ENCODE measurements at regions of chr17 and their contacts with region 1.

Region 1: DNA sequence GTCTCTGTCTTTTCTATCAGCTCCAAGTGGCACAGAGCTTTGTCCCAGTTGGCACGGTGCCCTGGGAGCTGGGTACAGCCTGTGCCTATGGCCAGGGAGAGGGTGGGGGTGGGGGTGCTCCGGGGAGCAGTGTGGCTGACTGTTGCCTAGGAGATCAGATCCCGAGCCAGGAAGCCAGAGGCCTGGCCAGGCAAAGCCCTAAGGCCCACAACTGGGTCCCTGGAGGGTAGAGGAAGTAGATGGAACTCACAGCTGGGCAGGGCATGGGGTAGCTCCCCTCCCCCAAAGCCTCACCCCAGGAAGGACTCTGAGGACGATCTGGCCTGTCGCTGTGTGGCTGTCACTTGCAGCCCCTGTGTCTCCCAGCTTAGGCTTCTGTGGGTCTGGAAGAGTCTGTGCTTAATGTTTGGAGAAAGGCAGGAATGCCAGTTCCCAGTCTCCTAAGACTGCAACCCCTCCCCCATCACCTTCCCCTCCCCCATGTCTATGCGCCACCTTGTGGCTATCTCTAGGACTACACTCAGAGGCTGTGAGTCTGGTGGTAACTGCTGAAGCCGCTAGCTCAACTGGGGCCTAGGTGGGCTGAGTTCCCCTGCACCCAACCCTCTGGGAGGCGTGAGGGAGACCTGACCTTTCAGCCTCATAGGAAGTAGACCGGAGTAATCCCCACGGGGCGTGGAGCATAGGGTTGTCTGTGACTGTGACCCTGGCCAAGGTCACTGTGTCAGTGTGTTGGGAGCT is 12.6 kb downstream of the THRA start:
- DNase-seq: peak; percentile 78 to 81
- H3K4me3 ChIP-seq: no peak overlapping the region
- H3K4me3 Mint-ChIP-seq: no peak overlapping the region
- H3K27ac Mint-ChIP-seq: peak overlapping the region; percentile 47
- H3K4me1 ChIP-seq: peaks cover 49% of the 10 kb centered on the region
- H3K4me1 Mint-ChIP-seq: peaks cover 27% of the 10 kb centered on the region
- H3K27me3 ChIP-seq: no peaks in the 10 kb centered on the region
- H3K27me3 Mint-ChIP-seq: no peaks in the 10 kb centered on the region
- CTCF ChIP-seq: peak; percentile 92 to 94

Region 2: DNA sequence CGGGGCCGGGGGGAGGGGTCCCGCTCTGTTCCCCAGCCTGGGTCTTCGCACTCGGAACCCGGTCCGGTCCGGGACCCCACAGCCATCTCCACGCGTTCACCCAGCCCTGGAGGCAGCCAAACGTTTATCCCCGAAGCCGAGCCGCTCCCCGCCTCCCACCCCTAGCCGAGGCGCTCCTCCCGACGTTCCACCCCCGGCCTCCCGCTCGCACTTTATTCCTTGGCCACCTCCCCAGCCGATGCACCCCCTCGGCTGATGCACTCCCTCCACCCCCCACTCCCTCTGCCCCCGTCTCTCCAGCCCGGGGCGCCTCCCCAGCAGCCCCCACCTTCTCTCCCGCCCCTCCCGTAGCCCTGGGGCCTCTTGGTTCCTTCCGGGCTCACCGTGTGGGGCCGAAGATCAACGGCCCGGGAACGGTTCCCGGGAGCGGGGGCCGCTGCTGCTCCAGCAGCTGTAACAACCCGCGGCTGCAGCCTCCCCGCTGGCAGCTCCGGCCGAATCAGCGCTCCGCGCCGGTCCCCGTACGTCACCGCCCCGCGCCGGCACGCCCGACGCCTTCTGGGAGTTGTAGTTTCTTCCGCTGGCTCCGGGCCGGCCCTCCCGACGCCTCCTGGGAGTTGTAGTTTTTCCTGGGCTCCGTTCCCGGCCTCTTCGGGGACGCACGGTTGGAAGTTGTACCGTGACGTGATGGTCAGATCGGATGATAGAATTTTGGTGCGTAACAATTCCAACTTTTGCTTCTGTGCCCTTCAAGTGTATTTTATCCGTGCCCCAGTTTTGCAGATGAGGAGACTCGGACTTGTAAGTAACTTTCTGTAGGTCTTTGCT is 148.1 kb before region 1 on chr17 and contains the starts of genes LRRC3C and ORMDL3:
- CTCF ChIA-PET with region 1: no interaction called
- POLR2A ChIA-PET with region 1: no interaction called
- intact Hi-C with region 1: no loop called
- DNase-seq: peak; percentile 95 to 97
- H3K4me3 ChIP-seq: peak within 1 kb of the TSS; percentile 89
- H3K4me3 Mint-ChIP-seq: peak within 1 kb of the TSS; percentile 87
- H3K27ac Mint-ChIP-seq: peak within 1 kb of the TSS; percentile 97
- H3K4me1 ChIP-seq: peaks cover 29% of the 10 kb centered on the region
- H3K4me1 Mint-ChIP-seq: peaks cover 7% of the 10 kb centered on the region
- H3K27me3 ChIP-seq: no peaks in the 10 kb centered on the region
- H3K27me3 Mint-ChIP-seq: no peaks in the 10 kb centered on the region
- CTCF ChIP-seq: no peak
- total RNA-seq, gene LRRC3C: not detected in 2 replicates
- total RNA-seq, gene ORMDL3: 70.6 and 75.2 TPM in 2 replicates

Region 3: GRCh38 chr17:39988206-39988810 is 87.1 kb before region 1 on chr17:
- CTCF ChIA-PET with region 1: no interaction called
- POLR2A ChIA-PET with region 1: no interaction called
- intact Hi-C with region 1: no loop called
- DNase-seq: no peak
- H3K4me3 ChIP-seq: no peak overlapping the region
- H3K4me3 Mint-ChIP-seq: no peak overlapping the region
- H3K27ac Mint-ChIP-seq: no peak overlapping the region
- H3K4me1 ChIP-seq: no peaks in the 10 kb centered on the region
- H3K4me1 Mint-ChIP-seq: no peaks in the 10 kb centered on the region
- H3K27me3 ChIP-seq: no peaks in the 10 kb centered on the region
- H3K27me3 Mint-ChIP-seq: no peaks in the 10 kb centered on the region
- CTCF ChIP-seq: no peak

Region 4: DNA sequence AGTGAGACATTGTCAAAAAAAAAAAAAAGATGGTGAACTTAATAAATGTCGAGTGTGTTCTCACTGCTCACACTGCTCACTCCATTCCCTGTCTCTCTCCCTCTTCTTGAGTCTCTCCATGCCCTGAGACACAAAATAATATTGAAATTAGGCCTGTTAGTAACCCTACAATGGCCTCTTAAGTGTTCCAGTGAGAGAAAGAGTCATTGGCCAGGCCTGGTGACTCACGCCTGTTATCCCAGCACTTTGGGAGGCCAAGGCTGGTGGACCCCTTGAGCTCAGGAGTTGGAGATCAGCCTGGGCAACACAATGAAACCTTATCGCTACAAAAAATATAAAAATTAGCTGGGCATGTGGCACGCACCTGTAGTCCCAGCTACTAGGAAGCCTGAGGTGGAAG is 76.3 kb before region 1 on chr17:
- CTCF ChIA-PET with region 1: no interaction called
- POLR2A ChIA-PET with region 1: no interaction called
- intact Hi-C with region 1: no loop called
- DNase-seq: no peak
- H3K4me3 ChIP-seq: no peak overlapping the region
- H3K4me3 Mint-ChIP-seq: no peak overlapping the region
- H3K27ac Mint-ChIP-seq: no peak overlapping the region
- H3K4me1 ChIP-seq: no peaks in the 10 kb centered on the region
- H3K4me1 Mint-ChIP-seq: no peaks in the 10 kb centered on the region
- H3K27me3 ChIP-seq: no peaks in the 10 kb centered on the region
- H3K27me3 Mint-ChIP-seq: no peaks in the 10 kb centered on the region
- CTCF ChIP-seq: no peak

Region 5: DNA sequence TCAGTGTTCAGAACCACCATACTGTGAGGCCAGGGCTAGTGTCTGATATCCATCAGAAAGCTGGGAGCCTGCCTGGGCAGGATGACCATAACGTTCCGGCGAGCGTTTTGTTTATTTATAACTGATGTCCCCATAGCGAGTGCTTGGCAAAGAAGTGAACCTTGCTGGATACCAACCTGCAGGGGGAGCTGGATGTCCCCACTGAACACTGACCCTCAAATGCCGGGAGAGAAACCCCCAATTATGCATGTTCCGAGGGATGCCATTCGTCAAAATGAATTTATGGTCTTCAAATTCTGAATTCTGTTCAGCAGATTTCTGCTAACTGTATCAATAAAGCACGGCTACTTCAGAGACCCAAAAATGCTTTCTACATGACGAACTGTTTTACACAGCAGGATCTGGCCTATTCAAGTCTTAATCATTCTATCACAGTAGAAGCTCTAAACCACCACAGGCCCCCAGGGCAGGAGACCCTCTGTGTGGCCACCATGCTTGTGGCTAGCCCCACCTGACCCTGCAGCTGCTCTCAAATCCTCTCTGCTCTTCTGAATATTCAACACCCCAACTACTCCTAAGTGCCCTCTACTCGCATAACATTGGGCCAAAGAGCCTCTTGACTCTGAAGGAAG is 36.4 kb before region 1 on chr17:
- CTCF ChIA-PET with region 1: interaction called, 10 read pairs
- POLR2A ChIA-PET with region 1: no interaction called
- intact Hi-C with region 1: loop called (anchors 2 kb)
- DNase-seq: peak in 1 of 2 experiments; percentile 53
- H3K4me3 ChIP-seq: no peak overlapping the region
- H3K4me3 Mint-ChIP-seq: no peak overlapping the region
- H3K27ac Mint-ChIP-seq: no peak overlapping the region
- H3K4me1 ChIP-seq: no peaks in the 10 kb centered on the region
- H3K4me1 Mint-ChIP-seq: no peaks in the 10 kb centered on the region
- H3K27me3 ChIP-seq: no peaks in the 10 kb centered on the region
- H3K27me3 Mint-ChIP-seq: no peaks in the 10 kb centered on the region
- CTCF ChIP-seq: peak; percentile 44 to 56

Region 6: GRCh38 chr17:40062329-40063186 is 12.8 kb before region 1 on chr17 and contains the start of gene THRA:
- CTCF ChIA-PET with region 1: interaction called, 66 read pairs
- POLR2A ChIA-PET with region 1: interaction called, 4 read pairs
- intact Hi-C with region 1: loop called (anchors 1 kb)
- DNase-seq: peak in 1 of 2 experiments; percentile 83
- H3K4me3 ChIP-seq: peak within 1 kb of the TSS; percentile 99
- H3K4me3 Mint-ChIP-seq: peak within 1 kb of the TSS; percentile 78
- H3K27ac Mint-ChIP-seq: peak within 1 kb of the TSS; percentile 23
- H3K4me1 ChIP-seq: peaks cover 26% of the 10 kb centered on the region
- H3K4me1 Mint-ChIP-seq: peaks cover 34% of the 10 kb centered on the region
- H3K27me3 ChIP-seq: no peaks in the 10 kb centered on the region
- H3K27me3 Mint-ChIP-seq: no peaks in the 10 kb centered on the region
- CTCF ChIP-seq: no peak
- total RNA-seq, gene THRA: 27.3 and 29.3 TPM in 2 replicates